ENCODE measurements at regions of chr1 and their contacts with region 1.

Region 1: GRCh38 chr1:27671964-27672749 is at the start of gene IFI6:
- DNase-seq: peak; percentile 92 to 93
- ATAC-seq: peak; percentile 98
- H3K4me3 ChIP-seq: peak within 1 kb of the TSS; percentile 32 to 72
- H3K27ac ChIP-seq: peak within 1 kb of the TSS; percentile 69 to 96
- H3K4me1 ChIP-seq: peaks cover 0 to 4% of the 10 kb centered on the region in 2 donors
- H3K27me3 ChIP-seq: no peaks in the 10 kb centered on the region
- total RNA-seq, gene IFI6: 116 to 143 TPM

Region 2: DNA sequence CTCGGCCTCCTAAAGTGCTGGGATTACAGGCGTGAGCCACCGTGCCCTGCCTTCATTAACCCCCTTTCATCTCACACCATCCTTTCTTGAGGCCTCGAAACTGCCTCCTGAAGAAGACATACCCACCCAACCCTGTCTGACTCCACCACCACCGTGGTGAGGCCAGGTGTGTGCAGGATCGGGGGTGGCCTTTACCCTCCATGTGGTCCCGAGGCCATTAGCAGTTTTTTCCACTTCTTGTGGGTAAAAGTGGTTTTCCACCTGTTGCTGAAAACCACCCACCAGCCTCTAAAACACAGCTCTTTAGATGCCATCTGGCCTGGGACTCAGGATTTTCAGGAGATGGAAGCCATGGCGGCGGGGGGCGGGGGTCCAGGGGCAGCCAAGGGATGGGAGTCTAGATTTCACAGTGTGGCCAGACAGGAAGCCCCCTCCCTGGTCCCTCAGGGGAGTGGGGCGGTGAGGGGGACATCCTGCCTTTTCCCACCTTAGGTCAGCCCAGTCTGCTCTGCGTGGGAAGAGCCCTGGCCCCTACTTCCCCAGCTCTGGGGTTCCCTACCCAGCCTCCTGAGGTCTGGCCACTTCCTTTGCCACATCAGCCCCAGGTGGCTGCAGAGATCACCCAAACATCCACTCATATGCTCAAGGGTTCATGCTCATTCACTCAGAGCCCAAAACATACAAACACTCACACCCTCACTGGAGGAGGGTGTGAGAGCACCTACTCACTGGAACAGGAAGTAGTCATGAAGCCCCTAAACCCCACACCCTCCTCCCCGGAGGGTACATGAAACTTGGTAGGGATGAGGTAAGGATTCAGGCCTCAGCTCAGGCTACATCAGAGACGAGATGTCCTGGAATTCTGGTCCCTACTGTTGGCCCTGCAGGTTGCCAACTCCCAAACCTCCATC is 39.5 kb before region 1 on chr1:
- intact Hi-C with region 1: no loop called
- DNase-seq: no peak
- ATAC-seq: no peak
- H3K4me3 ChIP-seq: no peak overlapping the region
- H3K27ac ChIP-seq: no peak overlapping the region
- H3K4me1 ChIP-seq: no peaks in the 10 kb centered on the region
- H3K27me3 ChIP-seq: no peaks in the 10 kb centered on the region

Region 3: GRCh38 chr1:27772933-27773825 is 101.0 kb after region 1 on chr1 and contains the start of gene STX12:
- intact Hi-C with region 1: loop called (anchors 2 to 5 kb)
- DNase-seq: peak; percentile 99
- ATAC-seq: peak; percentile 99
- H3K4me3 ChIP-seq: peak within 1 kb of the TSS; percentile 67 to 80
- H3K27ac ChIP-seq: peak within 1 kb of the TSS; percentile 83 to 95
- H3K4me1 ChIP-seq: peaks cover 0 to 5% of the 10 kb centered on the region in 2 donors
- H3K27me3 ChIP-seq: no peaks in the 10 kb centered on the region
- total RNA-seq, gene STX12: 70.0 to 81.4 TPM

Measured in aorta (tissue), 5 donors.